ENCODE measurements at regions of chr18 and their contacts with region 1.

Region 1: DNA sequence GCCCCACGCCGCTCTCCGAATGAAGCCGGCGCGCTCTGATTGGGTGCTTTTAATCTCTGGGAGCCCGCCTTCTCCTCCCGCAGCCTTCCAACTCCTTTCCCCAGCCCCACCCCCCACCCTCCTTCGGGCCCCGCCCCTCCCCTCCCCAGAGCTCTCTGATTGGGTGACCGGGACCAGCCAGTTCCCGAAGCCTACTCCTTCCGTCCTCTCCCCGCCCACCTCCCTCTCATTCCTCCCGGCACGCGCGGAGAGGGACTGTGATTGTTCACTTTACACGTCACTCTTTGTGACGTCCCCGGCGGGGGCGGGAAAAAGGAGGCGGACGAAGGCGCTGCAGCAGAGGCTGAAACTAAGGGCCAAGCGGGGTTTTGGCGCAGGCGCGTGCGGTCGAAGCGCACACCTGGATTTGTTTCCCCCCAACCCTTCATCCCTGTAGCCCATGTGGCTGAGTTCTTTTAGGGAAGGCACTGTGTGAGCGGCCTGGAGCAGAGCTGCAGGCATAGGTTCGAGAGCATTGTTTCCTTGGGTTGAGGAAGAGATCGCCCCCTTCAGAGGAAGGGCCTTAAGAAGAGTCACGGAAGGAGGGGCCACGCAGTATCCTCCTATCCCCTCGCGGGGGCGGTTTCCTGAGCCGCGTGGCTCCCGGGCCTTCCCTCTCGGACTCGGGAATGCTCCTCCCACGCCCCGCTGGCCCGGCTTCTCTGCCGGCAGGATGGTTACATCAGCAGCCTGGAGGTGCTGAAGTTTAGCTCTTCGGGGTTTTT is at the start of gene MEX3C:
- DNase-seq: peak; percentile 99
- ATAC-seq: peak; percentile 90
- H3K4me3 Mint-ChIP-seq: peak within 1 kb of the TSS; percentile 96
- H3K27ac Mint-ChIP-seq: peak within 1 kb of the TSS; percentile 99
- H3K4me1 Mint-ChIP-seq: peaks cover 26% of the 10 kb centered on the region
- H3K27me3 Mint-ChIP-seq: no peaks in the 10 kb centered on the region
- CTCF ChIP-seq: no peak
- total RNA-seq, gene MEX3C: 70.4 to 79.4 TPM (median 73.9 TPM) in 3 replicates

Region 2: DNA sequence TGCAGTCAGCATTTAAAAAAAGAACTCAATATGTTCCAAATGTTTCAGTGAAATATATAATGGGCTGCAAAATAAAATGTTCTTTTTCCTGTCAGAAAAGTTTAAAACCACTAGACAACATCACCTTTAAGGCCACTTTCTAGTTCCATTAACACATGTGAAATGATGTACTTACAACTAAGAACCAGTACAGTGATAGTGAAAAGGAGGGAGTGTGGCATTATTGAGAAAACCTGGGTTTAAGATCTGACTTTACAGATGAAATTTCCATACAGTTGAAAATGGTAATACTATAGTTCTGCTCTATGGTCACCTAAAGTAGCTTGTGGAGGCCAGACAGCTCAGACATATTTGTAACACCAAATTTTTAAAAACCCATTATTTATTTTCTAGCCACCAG is 15.0 kb before region 1 on chr18:
- CTCF ChIA-PET with region 1: interaction called, 3 read pairs
- POLR2A ChIA-PET with region 1: interaction called, 10 read pairs
- DNase-seq: no peak
- ATAC-seq: no peak
- H3K4me3 Mint-ChIP-seq: no peak overlapping the region
- H3K27ac Mint-ChIP-seq: peak overlapping the region; percentile 67; the same call in 1 of the 2 replicates
- H3K4me1 Mint-ChIP-seq: peaks cover 51% of the 10 kb centered on the region
- H3K27me3 Mint-ChIP-seq: no peaks in the 10 kb centered on the region
- CTCF ChIP-seq: no peak

Measured in WTC11 (cell line).